Activated naive CD4-positive, alpha-beta T cell treated with anti-CD3 and anti-CD28 coated beads for 36 hours (primary cell): ENCODE measurements at regions of chr12 and their contacts with region 1.

Region 1: GRCh38 chr12:116060764-116061163 is 216.7 kb downstream of the MED13L start:
- DNase-seq: no peak
- H3K4me3 Mint-ChIP-seq: peak overlapping the region; percentile 56
- H3K27ac Mint-ChIP-seq: peak overlapping the region; percentile 81
- H3K4me1 Mint-ChIP-seq: peaks cover 52% of the 10 kb centered on the region
- H3K27me3 Mint-ChIP-seq: no peaks in the 10 kb centered on the region

Region 2: GRCh38 chr12:116026768-116027550 is 33.8 kb before region 1 on chr12:
- CTCF ChIA-PET with region 1: no interaction called
- intact Hi-C with region 1: loop called (anchors 2 kb)
- DNase-seq: no peak
- H3K4me3 Mint-ChIP-seq: no peak overlapping the region
- H3K27ac Mint-ChIP-seq: no peak overlapping the region
- H3K4me1 Mint-ChIP-seq: peaks cover 39% of the 10 kb centered on the region
- H3K27me3 Mint-ChIP-seq: no peaks in the 10 kb centered on the region

Region 3: GRCh38 chr12:116080415-116080814 is 19.7 kb after region 1 on chr12:
- CTCF ChIA-PET with region 1: no interaction called
- intact Hi-C with region 1: loop called (anchors 1 kb)
- DNase-seq: no peak
- H3K4me3 Mint-ChIP-seq: no peak overlapping the region
- H3K27ac Mint-ChIP-seq: no peak overlapping the region
- H3K4me1 Mint-ChIP-seq: peaks cover 15% of the 10 kb centered on the region
- H3K27me3 Mint-ChIP-seq: no peaks in the 10 kb centered on the region

Region 4: GRCh38 chr12:116172224-116172849 is 111.6 kb after region 1 on chr12:
- CTCF ChIA-PET with region 1: no interaction called
- intact Hi-C with region 1: loop called (anchors 1 kb)
- DNase-seq: peak; percentile 78
- H3K4me3 Mint-ChIP-seq: peak overlapping the region; percentile 58
- H3K27ac Mint-ChIP-seq: peak overlapping the region; percentile 92
- H3K4me1 Mint-ChIP-seq: peaks cover 67% of the 10 kb centered on the region
- H3K27me3 Mint-ChIP-seq: no peaks in the 10 kb centered on the region